ENCODE measurements at regions of chrX and their contacts with region 1.

Region 1: DNA sequence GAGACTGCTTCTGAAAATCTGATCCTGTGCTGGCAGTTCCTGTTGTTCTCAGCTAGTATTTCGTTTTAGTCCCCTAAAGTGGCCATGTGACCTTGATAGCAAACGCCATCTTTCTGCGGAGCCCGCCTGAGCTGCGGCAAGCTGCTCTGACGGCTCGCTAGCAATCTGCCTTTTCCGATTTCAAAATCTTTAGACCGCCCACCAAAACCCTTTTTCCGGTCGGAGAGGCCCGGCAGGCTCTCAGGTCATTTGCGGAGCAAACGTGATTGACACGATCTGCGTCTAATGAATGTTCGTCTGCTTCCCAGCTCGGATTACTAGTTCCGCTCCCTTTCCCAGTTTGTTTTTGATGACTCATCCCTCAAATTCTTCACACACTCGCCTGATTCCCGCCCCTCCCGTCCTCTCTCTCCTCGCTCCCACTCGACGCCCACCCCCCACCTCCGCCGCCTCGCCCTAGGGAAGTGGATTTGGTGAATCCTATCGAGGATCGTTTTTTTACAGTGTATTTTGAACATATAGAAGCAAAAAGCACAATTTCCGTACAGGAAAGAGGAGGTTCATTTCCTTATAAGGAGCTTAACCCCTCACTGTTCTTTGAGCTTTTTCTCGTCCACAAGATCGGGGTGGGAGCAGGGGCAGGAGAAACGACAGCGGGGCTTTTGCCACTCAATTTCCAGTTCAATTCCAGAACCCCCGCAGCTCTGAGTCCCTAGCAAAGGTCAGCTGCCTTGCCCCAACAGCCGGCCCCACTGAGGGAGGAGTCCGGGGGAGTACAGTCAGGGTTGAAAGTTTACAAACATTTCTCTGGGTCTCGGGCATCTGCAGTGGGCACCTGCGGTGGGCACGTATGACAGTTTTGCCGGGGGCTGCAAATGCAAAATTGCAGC is 37.5 kb downstream of the NLGN3 start:
- DNase-seq: peak; percentile 81
- H3K4me3 Mint-ChIP-seq: peak overlapping the region; percentile 88
- H3K27ac Mint-ChIP-seq: peak overlapping the region; percentile 93
- H3K4me1 Mint-ChIP-seq: peaks cover 12% of the 10 kb centered on the region
- H3K27me3 Mint-ChIP-seq: no peaks in the 10 kb centered on the region

Region 2: DNA sequence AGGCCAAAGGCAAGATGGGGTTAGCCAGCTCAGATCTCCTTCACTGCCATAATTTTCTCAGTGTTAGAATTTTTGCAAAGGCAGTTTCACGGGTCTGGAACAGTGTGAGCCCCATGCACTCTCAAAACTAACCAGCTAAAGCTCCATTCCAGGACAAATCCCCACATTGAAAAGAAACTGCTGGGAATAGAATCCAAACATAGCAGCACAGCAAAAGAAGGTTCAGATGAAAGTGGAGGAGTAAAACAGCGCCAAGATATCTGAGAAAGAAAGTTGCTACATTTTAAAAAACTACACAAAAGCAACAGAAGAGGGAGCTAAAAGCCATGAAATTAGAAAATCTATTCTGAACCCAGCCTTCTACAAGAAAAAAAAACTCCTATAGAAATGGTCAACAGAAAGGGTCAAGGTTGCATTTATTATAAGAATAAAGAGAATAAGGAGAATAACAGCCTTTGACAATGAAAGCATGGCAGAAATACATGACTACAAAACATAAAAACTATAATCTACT is 211.6 kb before region 1 on chrX:
- intact Hi-C with region 1: loop called (anchors 2 kb)
- DNase-seq: no peak
- H3K4me3 Mint-ChIP-seq: no peak overlapping the region
- H3K27ac Mint-ChIP-seq: no peak overlapping the region
- H3K4me1 Mint-ChIP-seq: peaks cover 1% of the 10 kb centered on the region
- H3K27me3 Mint-ChIP-seq: peaks cover 9% of the 10 kb centered on the region

Region 3: GRCh38 chrX:71017389-71017944 is 164.7 kb before region 1 on chrX:
- intact Hi-C with region 1: no loop called
- DNase-seq: no peak
- H3K4me3 Mint-ChIP-seq: no peak overlapping the region
- H3K27ac Mint-ChIP-seq: no peak overlapping the region
- H3K4me1 Mint-ChIP-seq: no peaks in the 10 kb centered on the region
- H3K27me3 Mint-ChIP-seq: no peaks in the 10 kb centered on the region

Region 4: GRCh38 chrX:71095543-71095911 is 86.6 kb before region 1 on chrX and contains the start of gene FOXO4:
- intact Hi-C with region 1: loop called (anchors 5 kb)
- DNase-seq: peak; percentile 84
- H3K4me3 Mint-ChIP-seq: peak within 1 kb of the TSS; percentile 94
- H3K27ac Mint-ChIP-seq: peak within 1 kb of the TSS; percentile 94
- H3K4me1 Mint-ChIP-seq: peaks cover 19% of the 10 kb centered on the region
- H3K27me3 Mint-ChIP-seq: no peaks in the 10 kb centered on the region
- total RNA-seq, gene FOXO4: 10.6 and 11.6 TPM in 2 replicates

Region 5: GRCh38 chrX:71198066-71198465 is 15.9 kb after region 1 on chrX:
- intact Hi-C with region 1: loop called (anchors 1 kb)
- DNase-seq: no peak
- H3K4me3 Mint-ChIP-seq: peak overlapping the region; percentile 86
- H3K27ac Mint-ChIP-seq: peak overlapping the region; percentile 88
- H3K4me1 Mint-ChIP-seq: peaks cover 15% of the 10 kb centered on the region
- H3K27me3 Mint-ChIP-seq: no peaks in the 10 kb centered on the region

Region 6: GRCh38 chrX:71254092-71254941 is 72.2 kb after region 1 on chrX and contains the start of gene ZMYM3:
- intact Hi-C with region 1: loop called (anchors 1 kb)
- DNase-seq: peak; percentile 72
- H3K4me3 Mint-ChIP-seq: peak within 1 kb of the TSS; percentile 88
- H3K27ac Mint-ChIP-seq: peak within 1 kb of the TSS; percentile 93
- H3K4me1 Mint-ChIP-seq: peaks cover 27% of the 10 kb centered on the region
- H3K27me3 Mint-ChIP-seq: no peaks in the 10 kb centered on the region
- total RNA-seq, gene ZMYM3: 26.8 and 31.4 TPM in 2 replicates

Region 7: DNA sequence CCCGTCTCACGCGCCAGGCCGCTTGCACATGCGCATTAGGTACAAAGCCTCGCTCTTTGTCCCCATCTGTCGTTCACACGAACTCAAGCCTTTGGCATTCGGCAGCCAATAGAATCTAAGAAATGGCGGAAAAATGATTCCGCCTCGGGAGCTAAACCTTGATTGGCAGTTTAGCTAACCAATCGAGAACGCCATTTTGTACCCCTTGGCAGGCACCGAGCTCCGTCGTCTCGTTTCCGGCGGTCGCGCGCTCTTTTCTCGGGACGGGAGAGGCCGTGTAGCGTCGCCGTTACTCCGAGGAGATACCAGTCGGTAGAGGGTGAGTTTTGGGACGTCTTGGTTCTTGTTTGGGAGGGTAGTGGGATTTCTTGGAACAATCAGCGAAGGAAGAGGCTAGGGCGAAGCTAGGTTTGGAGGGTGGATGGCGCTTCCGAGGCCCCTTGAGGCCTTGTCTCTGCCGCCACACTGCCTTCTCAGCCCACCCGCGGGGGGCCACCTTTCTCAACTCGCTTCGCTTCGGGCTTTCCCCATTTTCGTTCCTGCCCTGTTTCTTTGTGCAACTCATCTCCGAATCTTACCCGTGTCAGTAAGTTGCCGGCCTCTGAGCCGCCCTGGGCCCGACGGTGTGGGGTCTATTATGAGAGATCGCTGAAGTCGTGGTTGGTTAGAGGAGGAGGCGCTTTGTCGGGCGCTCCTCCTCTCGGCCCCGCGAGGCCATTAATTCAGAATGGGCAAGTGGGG is 101.4 kb after region 1 on chrX and contains the start of gene NONO:
- intact Hi-C with region 1: loop called (anchors 2 kb)
- DNase-seq: peak; percentile 84
- H3K4me3 Mint-ChIP-seq: peak within 1 kb of the TSS; percentile 88
- H3K27ac Mint-ChIP-seq: peak within 1 kb of the TSS; percentile 100
- H3K4me1 Mint-ChIP-seq: peaks cover 12% of the 10 kb centered on the region
- H3K27me3 Mint-ChIP-seq: peaks cover 3% of the 10 kb centered on the region
- total RNA-seq, gene NONO: 585 and 612 TPM in 2 replicates

Region 8: GRCh38 chrX:71365876-71366673 is 183.9 kb after region 1 on chrX and contains the start of gene TAF1:
- intact Hi-C with region 1: loop called (anchors 5 kb)
- DNase-seq: peak; percentile 88
- H3K4me3 Mint-ChIP-seq: peak within 1 kb of the TSS; percentile 98
- H3K27ac Mint-ChIP-seq: peak within 1 kb of the TSS; percentile 99
- H3K4me1 Mint-ChIP-seq: peaks cover 20% of the 10 kb centered on the region
- H3K27me3 Mint-ChIP-seq: no peaks in the 10 kb centered on the region
- total RNA-seq, gene TAF1: 48.0 and 49.6 TPM in 2 replicates